HEK293T (cell line): ENCODE measurements at regions of chr17 and their contacts with region 1.

Region 1: DNA sequence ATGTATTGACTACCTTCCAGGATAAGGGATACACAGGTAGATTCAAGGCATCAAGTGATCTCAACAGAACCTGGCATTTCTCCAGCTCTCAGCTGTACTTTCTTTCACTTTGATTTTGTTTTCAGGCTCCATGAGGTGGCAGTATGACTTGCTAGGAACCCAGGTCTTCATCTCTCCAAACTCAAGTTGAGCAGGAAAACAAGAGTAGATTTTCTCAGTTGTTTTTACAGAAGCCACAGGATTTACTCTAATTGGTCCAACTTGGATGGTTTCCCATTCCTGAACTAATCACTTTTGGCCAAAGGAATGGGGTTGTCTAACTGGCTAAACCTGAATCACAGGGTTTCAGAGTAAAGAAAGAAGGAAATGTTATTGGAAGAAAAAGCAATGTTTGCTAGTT is 146.6 kb downstream of the TRIM37 start:
- DNase-seq: peak; percentile 19

Region 2: DNA sequence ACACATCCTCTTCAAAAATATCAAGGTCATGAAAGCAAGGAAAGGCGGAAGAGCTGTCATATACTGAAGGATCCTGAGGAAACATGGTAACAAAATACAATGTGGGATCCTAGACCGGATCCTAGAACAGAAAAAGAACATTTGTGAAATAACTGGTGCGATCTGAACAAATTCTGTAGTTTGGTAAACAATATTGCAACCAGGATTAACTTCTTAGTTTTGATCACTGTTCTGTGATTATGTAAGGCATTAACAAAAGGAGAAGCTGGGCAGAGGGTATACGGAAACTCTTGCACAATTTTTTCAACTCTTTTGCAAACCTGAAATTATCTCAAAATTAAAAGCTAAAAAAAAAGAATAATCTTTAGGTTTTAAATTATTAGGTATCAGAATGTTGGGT is 36.9 kb after region 1 on chr17:
- CTCF ChIA-PET with region 1: interaction called, 10 read pairs
- POLR2A ChIA-PET with region 1: no interaction called
- DNase-seq: no peak